PC-3 (cell line): ENCODE measurements at regions of chr1 and their contacts with region 1.

Region 1: DNA sequence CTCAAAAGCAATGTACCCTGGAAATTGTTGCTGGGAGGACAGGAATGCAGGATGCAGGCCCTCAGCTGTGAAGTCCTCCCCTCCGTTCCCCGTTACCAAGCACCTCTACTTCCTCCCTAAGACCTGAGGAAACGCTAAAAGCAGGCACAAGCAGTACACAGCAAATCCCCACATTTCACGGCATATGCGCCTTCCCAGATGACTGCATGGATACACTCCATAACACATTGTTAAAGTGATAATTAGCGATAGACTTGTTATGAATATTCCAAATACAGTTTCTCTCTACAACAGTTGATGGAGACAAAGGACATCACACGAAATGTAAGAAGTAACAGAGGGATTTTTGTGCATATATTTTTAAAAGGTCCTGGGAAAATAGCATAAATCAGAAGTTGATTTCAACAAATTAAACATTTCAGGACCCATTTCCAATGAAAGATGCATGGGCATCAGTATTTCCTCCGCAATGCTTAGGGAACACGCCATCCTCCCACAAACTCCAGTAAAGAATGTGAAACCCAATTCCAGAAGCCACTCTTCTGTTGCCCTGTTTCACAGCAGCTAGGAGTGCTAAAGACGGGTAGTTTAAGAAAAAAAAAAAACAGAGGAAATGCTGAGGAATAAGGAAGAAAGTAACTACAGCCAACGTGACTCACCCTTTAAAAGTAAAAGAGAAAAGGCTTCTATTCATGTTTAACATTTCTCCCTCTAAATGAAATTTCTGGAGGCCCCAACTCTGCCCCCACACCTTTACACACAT is 75.5 kb downstream of the HIVEP3 start:
- DNase-seq: peak; percentile 68
- ATAC-seq: peak; percentile 19
- H3K4me3 ChIP-seq: no peak overlapping the region
- H3K27ac ChIP-seq: peak overlapping the region; percentile 67
- H3K4me1 ChIP-seq: peaks cover 71% of the 10 kb centered on the region
- H3K27me3 ChIP-seq: no peaks in the 10 kb centered on the region
- CTCF ChIP-seq: 0 out of 2 replicates have a peak, but pooled peaks have one; percentile 21

Region 2: GRCh38 chr1:41855713-41856112 is 12.5 kb after region 1 on chr1:
- CTCF ChIA-PET with region 1: no interaction called
- POLR2A ChIA-PET with region 1: no interaction called
- intact Hi-C with region 1: no loop called
- DNase-seq: peak; percentile 70
- ATAC-seq: no peak
- H3K4me3 ChIP-seq: no peak overlapping the region
- H3K27ac ChIP-seq: no peak overlapping the region
- H3K4me1 ChIP-seq: peaks cover 68% of the 10 kb centered on the region
- H3K27me3 ChIP-seq: no peaks in the 10 kb centered on the region
- CTCF ChIP-seq: no peak

Region 3: GRCh38 chr1:41882068-41882477 is 38.9 kb after region 1 on chr1:
- CTCF ChIA-PET with region 1: no interaction called
- POLR2A ChIA-PET with region 1: no interaction called
- intact Hi-C with region 1: no loop called
- DNase-seq: peak; percentile 81
- ATAC-seq: peak; percentile 36
- H3K4me3 ChIP-seq: peak overlapping the region; percentile 18; the same call in 1 of the 2 replicates
- H3K27ac ChIP-seq: peak overlapping the region; percentile 74
- H3K4me1 ChIP-seq: peaks cover 42% of the 10 kb centered on the region
- H3K27me3 ChIP-seq: no peaks in the 10 kb centered on the region
- CTCF ChIP-seq: no peak

Region 4: GRCh38 chr1:41902125-41902524 is 59.0 kb after region 1 on chr1:
- CTCF ChIA-PET with region 1: no interaction called
- POLR2A ChIA-PET with region 1: no interaction called
- intact Hi-C with region 1: loop called (anchors 5 kb)
- DNase-seq: peak; percentile 59
- ATAC-seq: peak; percentile 16
- H3K4me3 ChIP-seq: no peak overlapping the region
- H3K27ac ChIP-seq: peak overlapping the region; percentile 80
- H3K4me1 ChIP-seq: peaks cover 52% of the 10 kb centered on the region
- H3K27me3 ChIP-seq: no peaks in the 10 kb centered on the region
- CTCF ChIP-seq: no peak

Region 5: DNA sequence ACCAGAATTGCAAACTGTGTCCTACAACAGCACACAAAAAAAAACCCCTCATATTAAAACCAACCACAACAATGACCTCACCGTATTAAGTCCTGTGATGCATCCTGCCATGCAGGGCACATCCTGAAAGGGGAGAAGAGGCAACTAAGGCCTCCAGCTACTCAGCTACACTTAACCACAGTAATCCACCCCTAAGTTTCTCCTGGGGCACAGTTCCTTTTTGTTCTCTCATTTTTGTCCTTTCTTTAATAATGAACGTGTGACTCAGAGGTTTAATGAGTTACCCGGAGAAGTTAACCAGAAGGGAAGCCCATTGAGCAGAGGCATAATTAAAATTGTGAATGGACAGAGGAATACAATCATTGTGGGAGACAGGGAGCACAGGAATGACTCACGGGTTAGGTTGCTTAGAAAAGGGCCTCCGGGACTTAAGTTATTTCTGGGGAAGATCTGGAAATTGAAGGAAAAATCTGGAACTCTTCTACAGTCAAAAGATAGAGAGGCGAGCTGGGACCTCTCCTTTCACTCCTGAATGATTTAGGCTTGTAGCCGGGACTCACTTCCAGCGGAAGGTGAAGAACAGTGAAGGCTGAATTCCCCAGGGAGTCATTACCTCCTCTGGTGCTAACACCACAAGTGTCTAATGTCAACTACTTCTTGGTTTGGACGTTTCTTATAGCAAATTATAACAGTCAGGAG is 112.4 kb after region 1 on chr1:
- CTCF ChIA-PET with region 1: no interaction called
- POLR2A ChIA-PET with region 1: no interaction called
- intact Hi-C with region 1: loop called (anchors 2 kb)
- DNase-seq: peak; percentile 96
- ATAC-seq: peak; percentile 82
- H3K4me3 ChIP-seq: peak overlapping the region; percentile 51; the same call in 1 of the 2 replicates
- H3K27ac ChIP-seq: peak overlapping the region; percentile 99
- H3K4me1 ChIP-seq: peaks cover 62% of the 10 kb centered on the region
- H3K27me3 ChIP-seq: no peaks in the 10 kb centered on the region
- CTCF ChIP-seq: no peak

Region 6: GRCh38 chr1:41980827-41981653 is 137.9 kb after region 1 on chr1:
- CTCF ChIA-PET with region 1: no interaction called
- POLR2A ChIA-PET with region 1: no interaction called
- intact Hi-C with region 1: loop called (anchors 10 kb)
- DNase-seq: peak; percentile 58
- ATAC-seq: peak; percentile 87
- H3K4me3 ChIP-seq: peak overlapping the region; percentile 15; the same call in 1 of the 2 replicates
- H3K27ac ChIP-seq: peak overlapping the region; percentile 71
- H3K4me1 ChIP-seq: peaks cover 38% of the 10 kb centered on the region
- H3K27me3 ChIP-seq: no peaks in the 10 kb centered on the region
- CTCF ChIP-seq: no peak

Region 7: GRCh38 chr1:42173155-42173933 is 330.2 kb after region 1 on chr1:
- CTCF ChIA-PET with region 1: no interaction called
- POLR2A ChIA-PET with region 1: no interaction called
- intact Hi-C with region 1: loop called (anchors 5 kb)
- DNase-seq: peak; percentile 56
- ATAC-seq: peak; percentile 31
- H3K4me3 ChIP-seq: no peak overlapping the region
- H3K27ac ChIP-seq: peak overlapping the region; percentile 88
- H3K4me1 ChIP-seq: peaks cover 64% of the 10 kb centered on the region
- H3K27me3 ChIP-seq: no peaks in the 10 kb centered on the region
- CTCF ChIP-seq: peak; percentile 98